Motor neuron (in vitro differentiated cells): ENCODE measurements at regions of chr1 and their contacts with region 1.

Region 1: DNA sequence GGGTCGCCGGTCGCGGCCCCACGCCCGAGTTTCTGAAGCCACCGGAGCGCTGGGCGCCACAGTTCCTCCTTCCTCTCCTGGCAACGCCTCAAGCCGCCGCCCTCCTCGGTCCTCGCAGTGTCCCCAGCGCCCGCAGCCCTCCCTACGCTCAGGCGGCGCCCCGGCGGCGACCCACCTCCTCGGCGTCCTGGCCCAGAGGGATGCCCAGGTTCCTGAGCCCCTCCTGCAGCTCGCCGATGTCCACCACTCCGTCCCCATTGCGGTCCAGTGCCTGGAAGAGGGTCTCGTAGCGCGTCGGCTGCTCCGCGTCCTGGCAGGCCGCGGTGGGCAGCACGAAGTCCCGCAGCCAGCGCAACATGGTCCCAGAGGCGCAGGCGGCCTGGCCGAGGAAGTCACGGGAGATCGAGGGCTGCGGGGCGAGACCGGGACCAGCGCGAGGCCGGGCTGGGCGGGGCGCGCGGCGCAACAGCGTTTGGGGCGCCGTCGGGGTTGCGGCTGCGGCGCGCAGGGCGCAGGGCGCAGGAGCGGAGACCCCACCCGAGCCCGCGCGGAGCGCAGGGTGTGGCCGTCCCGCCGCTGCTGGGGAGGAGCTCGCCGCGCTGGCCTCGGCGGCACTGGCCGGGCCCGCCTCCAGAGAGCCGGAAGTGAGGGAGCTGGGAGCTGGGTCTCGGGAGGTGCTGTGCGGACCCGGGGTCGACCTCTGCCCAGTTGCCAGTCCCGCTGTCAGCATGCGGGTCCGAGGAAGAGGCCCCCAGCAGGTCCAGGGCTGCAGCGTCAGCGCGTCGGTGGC is at the start of gene SLC25A24:
- ATAC-seq: peak; percentile 92 to 98 (median 96)
- H3K4me3 ChIP-seq: peak within 1 kb of the TSS; percentile 74 to 89 (median 82)
- H3K27ac ChIP-seq: peak within 1 kb of the TSS; percentile 68 to 84
- H3K4me1 ChIP-seq: peaks cover 9 to 17% of the 10 kb centered on the region in 2 donors
- total RNA-seq, gene SLC25A24: 1.2 to 42.1 (median 23.5) TPM

Region 2: DNA sequence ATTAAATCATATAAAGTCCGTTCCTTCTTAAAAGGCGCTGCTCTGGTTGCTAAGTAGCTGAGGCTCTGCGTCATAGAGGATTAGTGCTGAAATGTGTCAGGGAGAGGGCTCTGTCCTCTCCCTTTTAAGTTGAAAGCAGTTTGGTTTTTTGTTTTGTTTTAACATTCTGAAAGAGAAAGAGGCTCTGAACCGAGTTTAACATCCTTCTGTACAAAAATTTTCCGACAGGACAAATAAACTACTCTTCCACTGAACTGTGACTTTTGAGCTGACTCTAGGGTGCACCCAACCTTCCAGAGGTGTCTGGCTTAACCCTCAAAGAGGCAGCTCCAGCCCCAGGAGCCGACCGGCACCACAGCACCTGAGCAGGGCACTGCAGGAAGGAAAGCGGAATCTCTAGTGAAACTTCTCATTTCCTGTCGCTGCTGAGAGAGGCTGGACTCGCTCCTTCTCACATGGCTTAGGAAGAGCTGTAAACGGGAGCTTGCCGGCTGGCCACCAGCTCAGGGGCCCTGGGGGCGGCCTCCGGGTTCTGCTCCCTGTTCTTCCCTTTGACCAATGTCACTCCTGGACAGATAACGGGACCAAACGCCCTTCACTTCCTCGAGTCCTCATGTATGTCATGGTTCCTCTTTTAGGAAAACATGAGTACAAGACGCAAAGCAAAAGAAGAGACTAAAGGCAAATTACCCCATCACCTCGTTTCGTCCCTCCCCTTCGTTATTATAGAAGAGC is 236.2 kb before region 1 on chr1:
- in situ Hi-C with region 1: no loop called
- ATAC-seq: peak in 6 of 8 experiments; percentile 1 to 25 (median 8)
- H3K4me3 ChIP-seq: peak overlapping the region; percentile 46 to 83 (median 63)
- H3K27ac ChIP-seq: peak overlapping the region in 1 of 2 donors; percentile 72
- H3K4me1 ChIP-seq: peaks cover 4 to 19% of the 10 kb centered on the region in 2 donors

Region 3: DNA sequence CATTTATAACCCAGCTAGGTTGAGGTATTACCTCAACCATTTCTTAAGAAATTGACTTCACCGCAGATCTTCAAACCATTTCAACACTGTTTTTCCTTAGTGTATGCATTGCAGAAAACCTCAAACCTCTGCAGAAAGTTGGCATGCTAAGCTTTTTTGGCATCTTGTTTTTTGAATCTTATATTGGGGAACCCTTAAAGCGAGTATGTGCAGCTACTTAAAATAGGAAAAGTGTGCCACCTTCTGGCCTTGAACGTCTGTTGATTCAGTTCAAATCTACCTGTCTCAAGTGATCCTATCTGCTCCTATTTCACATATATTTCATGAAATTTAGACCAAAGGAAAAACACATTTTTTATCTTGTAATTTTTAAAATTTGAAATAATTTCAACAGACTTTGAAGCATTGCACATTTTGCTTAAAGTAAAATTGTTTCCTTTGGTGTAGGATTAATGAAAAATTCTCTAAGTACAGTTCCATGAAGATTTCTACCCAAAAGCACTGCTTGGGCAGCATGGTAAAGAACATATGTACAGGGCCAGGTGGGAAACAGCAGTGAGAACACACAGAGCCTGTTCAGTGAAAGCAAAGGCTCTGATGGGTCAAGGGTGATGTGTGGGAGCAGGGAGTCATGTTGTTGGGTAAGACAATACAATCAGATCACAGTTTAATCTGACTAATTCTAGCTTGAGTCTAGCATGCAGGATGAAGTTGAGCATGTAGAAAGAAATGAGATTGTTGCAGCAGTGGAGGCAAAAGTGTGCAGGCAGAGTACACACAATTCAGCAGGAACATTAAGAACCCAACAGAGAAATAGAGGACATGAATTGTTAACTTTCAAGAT is 443.7 kb after region 1 on chr1:
- in situ Hi-C with region 1: loop called in 1 of 9 experiments (anchors 25 kb)
- ATAC-seq: peak; percentile 46 to 86 (median 64)
- H3K4me3 ChIP-seq: no peak overlapping the region
- H3K27ac ChIP-seq: no peak overlapping the region
- H3K4me1 ChIP-seq: peaks cover 0 to 3% of the 10 kb centered on the region in 2 donors

Region 4: GRCh38 chr1:108691942-108692723 is 492.2 kb after region 1 on chr1 and contains the start of gene PRPF38B:
- in situ Hi-C with region 1: loop called in 1 of 9 experiments (anchors 25 kb)
- ATAC-seq: peak; percentile 92 to 97 (median 96)
- H3K4me3 ChIP-seq: peak within 1 kb of the TSS; percentile 77 to 99 (median 94)
- H3K27ac ChIP-seq: peak within 1 kb of the TSS; percentile 97 to 98
- H3K4me1 ChIP-seq: peaks cover 3 to 23% of the 10 kb centered on the region in 2 donors
- total RNA-seq, gene PRPF38B: 22.0 to 61.4 (median 30.1) TPM